ENCODE measurements at regions of chr10 and their contacts with region 1.

Region 1: DNA sequence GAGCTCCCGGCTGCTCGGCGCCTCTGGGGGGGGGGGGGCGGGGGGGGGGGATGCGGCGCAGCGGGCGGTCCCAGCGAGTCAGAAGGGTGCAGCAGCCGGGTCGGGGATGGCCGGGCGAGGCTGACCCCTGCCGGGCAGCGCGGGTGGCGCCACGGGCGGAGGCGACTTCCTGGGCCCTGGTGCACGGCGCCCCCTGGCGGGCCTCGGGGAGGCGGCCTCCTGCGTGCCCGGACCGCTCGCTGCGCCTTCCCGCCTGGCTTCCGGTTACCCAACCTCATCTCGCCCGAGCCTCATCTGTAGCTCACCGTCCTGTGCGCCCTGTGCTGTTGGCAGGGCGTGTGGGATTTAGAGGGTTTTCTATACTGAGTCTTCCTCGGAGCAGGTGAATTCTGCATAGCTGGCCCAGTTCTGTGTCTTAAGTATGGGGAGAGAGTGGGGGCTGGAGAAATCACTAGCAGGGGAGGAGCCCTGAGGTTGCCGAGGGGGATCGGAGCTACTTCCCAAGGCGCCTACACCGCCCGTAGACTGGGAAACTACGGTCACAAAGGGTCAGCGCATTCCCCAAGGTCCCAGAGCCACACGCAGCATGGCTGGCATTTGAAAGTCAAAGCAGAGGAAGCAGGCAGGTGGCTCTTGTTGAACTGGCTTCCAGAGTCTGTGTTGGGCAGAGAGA is 28.3 kb upstream of the WDFY4 start:
- DNase-seq: peak; percentile 51 to 96 (median 81)
- ATAC-seq: peak; percentile 97
- H3K4me3 ChIP-seq: peak overlapping the region; percentile 70
- H3K4me3 Mint-ChIP-seq: peak overlapping the region; percentile 76 to 91 (median 85)
- H3K27ac ChIP-seq: no peak overlapping the region
- H3K27ac Mint-ChIP-seq: peak overlapping the region in 2 of 9 donors; percentile 65 to 73
- H3K4me1 ChIP-seq: peaks cover 4 to 5% of the 10 kb centered on the region in 2 donors
- H3K4me1 Mint-ChIP-seq: peaks cover 5 to 12% (median 7%) of the 10 kb centered on the region in 7 donors
- H3K27me3 ChIP-seq: no peaks in the 10 kb centered on the region
- H3K27me3 Mint-ChIP-seq: peaks cover 16 to 46% (median 25%) of the 10 kb centered on the region in 5 donors

Region 2: DNA sequence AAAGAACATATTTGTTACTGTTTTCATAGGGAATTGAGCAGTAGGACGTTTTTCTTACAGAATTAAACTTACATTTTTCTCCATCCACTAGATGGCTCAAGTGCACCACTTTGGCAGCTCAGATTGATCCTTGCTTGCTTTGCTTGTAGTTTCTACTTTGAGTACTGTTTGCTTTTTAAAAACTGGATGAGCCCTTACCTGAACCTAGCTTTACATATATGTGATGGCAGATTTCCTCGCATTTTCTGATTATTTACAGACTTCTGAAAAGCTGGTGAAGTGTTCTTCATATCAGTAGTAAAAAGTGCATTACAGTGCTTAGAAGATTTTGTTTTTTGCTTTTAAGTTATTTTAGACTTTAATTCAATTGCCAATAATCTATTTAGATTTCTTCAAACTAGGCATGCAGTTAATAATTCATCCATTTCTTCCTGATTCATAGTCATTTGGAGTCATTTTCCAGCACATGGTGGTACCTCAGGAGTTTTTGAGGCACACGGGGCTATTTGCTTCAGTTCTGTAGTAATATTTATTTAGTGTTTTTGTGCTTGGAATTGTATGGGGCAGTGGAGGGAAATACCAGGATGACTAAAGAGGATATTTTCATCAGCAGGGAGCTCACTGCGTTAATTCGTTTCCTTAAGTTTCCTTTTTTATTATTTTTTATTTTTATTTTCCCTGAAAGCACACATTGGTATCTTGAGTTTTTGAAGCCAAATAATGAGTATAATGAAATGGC is 292.6 kb before region 1 on chr10:
- CTCF ChIA-PET with region 1: interaction called, 19 read pairs
- POLR2A ChIA-PET with region 1: no interaction called
- intact Hi-C with region 1: loop called (anchors 1 kb)
- DNase-seq: peak in 6 of 9 donors; percentile 7 to 45 (median 37)
- ATAC-seq: peak; percentile 51
- H3K4me3 ChIP-seq: no peak overlapping the region
- H3K4me3 Mint-ChIP-seq: no peak overlapping the region
- H3K27ac ChIP-seq: no peak overlapping the region
- H3K27ac Mint-ChIP-seq: no peak overlapping the region
- H3K4me1 ChIP-seq: no peaks in the 10 kb centered on the region
- H3K4me1 Mint-ChIP-seq: peaks cover 4 to 59% (median 49%) of the 10 kb centered on the region in 7 donors
- H3K27me3 ChIP-seq: no peaks in the 10 kb centered on the region
- H3K27me3 Mint-ChIP-seq: no peaks in the 10 kb centered on the region

Region 3: DNA sequence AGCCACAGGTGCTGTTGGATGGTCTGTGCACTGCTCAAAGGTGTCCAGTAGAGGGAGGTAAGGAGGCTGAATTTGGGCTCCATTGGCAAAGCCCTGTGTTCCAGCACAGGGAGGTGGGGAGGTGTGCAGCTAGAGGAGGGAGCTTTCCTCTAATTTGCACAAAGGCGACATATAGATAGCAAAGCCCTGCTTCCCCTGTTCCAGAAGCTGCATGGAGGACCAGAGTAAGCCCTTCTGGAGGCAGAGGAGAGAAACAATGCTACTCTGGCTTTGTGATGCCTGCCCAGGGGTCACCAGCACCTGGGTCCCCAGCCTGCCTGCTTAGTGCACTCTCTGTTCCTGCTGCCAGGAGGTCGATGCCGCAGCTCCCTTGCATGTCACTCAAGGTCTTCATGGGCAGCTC is 48.1 kb before region 1 on chr10:
- CTCF ChIA-PET with region 1: no interaction called
- POLR2A ChIA-PET with region 1: no interaction called
- intact Hi-C with region 1: loop called in 1 of 2 experiments (anchors 5 kb)
- DNase-seq: peak in 4 of 9 donors; percentile 2 to 25 (median 12)
- ATAC-seq: peak; percentile 47
- H3K4me3 ChIP-seq: no peak overlapping the region
- H3K4me3 Mint-ChIP-seq: no peak overlapping the region
- H3K27ac ChIP-seq: no peak overlapping the region
- H3K27ac Mint-ChIP-seq: no peak overlapping the region
- H3K4me1 ChIP-seq: no peaks in the 10 kb centered on the region
- H3K4me1 Mint-ChIP-seq: peaks cover 0 to 6% (median 5%) of the 10 kb centered on the region in 7 donors
- H3K27me3 ChIP-seq: no peaks in the 10 kb centered on the region
- H3K27me3 Mint-ChIP-seq: peaks cover 36 to 60% (median 42%) of the 10 kb centered on the region in 5 donors

Region 4: DNA sequence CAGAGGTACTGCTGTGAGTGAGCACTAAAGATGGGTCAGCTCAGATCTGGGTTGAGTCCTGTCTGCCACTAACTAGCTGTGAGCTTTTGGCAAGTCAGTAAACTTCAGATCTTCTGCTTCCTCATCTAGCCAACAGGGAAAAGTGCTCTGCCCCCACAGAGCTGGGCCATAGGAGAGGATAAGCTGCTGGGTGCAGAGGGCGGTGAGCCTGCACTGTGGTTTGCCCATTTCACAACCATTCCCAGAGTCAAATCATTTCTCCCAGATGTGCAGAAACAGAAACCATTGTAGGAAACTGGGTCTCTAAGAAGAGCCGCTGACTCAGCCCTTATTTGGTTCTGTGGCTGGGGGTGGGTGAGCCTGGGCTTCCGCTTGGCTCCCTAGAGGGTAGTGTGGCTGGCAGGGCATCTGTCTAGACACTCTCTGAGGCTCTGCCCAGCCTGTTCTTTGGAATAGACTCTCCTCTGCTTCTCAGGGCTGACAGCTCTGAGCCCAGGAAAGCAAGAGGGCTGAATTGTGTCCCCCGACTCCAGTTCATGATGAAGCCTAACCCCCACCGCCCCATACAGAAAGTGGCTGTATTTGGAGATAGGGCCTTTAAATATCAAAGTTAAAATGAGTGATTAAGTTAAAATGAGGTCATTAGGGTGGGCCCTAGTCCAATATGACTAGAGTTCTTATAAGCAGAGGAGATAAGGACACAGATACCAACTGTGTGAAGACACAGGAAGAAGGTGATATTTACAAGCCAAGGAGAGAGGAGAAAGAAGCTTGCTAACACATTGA is 22.0 kb before region 1 on chr10:
- CTCF ChIA-PET with region 1: no interaction called
- POLR2A ChIA-PET with region 1: no interaction called
- intact Hi-C with region 1: no loop called
- DNase-seq: peak in 1 of 9 donors; percentile 26
- ATAC-seq: peak; percentile 91
- H3K4me3 ChIP-seq: no peak overlapping the region
- H3K4me3 Mint-ChIP-seq: peak overlapping the region in 1 of 10 donors; percentile 19
- H3K27ac ChIP-seq: no peak overlapping the region
- H3K27ac Mint-ChIP-seq: no peak overlapping the region
- H3K4me1 ChIP-seq: no peaks in the 10 kb centered on the region
- H3K4me1 Mint-ChIP-seq: peaks cover 9 to 19% (median 12%) of the 10 kb centered on the region in 7 donors
- H3K27me3 ChIP-seq: no peaks in the 10 kb centered on the region
- H3K27me3 Mint-ChIP-seq: peaks cover 18 to 39% (median 30%) of the 10 kb centered on the region in 5 donors

Region 5: GRCh38 chr10:48691812-48692528 is 35.6 kb after region 1 on chr10:
- CTCF ChIA-PET with region 1: no interaction called
- POLR2A ChIA-PET with region 1: no interaction called
- intact Hi-C with region 1: no loop called
- DNase-seq: no peak
- ATAC-seq: no peak
- H3K4me3 ChIP-seq: no peak overlapping the region
- H3K4me3 Mint-ChIP-seq: no peak overlapping the region
- H3K27ac ChIP-seq: no peak overlapping the region
- H3K27ac Mint-ChIP-seq: no peak overlapping the region
- H3K4me1 ChIP-seq: no peaks in the 10 kb centered on the region
- H3K4me1 Mint-ChIP-seq: no peaks in the 10 kb centered on the region
- H3K27me3 ChIP-seq: no peaks in the 10 kb centered on the region
- H3K27me3 Mint-ChIP-seq: peaks cover 0 to 19% (median 6%) of the 10 kb centered on the region in 5 donors

Region 6: DNA sequence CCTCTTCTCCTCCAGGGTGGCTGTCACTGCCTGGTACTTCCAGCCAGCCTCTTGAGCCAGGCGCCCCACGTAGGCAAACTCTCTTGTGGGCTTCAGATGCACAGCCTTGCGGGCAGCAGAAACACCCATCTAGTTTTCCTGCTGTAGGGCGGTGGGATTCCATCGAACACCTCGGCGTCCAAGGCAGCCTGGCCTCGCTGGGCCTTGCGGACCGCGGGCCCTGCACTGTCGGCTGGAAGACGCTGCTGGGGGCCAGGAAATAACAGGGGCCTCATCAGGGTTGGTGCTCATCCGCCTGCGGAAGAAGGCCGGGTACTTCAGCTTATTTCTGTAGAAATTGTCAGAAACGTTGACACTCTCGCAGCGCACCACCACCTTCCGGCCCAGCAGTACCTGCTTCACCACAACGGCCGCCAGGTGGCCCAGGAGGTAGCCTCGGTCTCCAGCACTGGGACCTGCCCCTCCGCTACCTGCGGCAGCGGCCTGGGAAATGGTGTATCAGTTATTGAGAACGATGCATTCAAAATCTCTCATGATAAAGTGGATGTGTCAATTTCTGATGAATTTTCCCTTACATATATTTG is 89.4 kb after region 1 on chr10:
- CTCF ChIA-PET with region 1: no interaction called
- POLR2A ChIA-PET with region 1: no interaction called
- intact Hi-C with region 1: no loop called
- DNase-seq: no peak
- ATAC-seq: no peak
- H3K4me3 ChIP-seq: no peak overlapping the region
- H3K4me3 Mint-ChIP-seq: no peak overlapping the region
- H3K27ac ChIP-seq: no peak overlapping the region
- H3K27ac Mint-ChIP-seq: no peak overlapping the region
- H3K4me1 ChIP-seq: no peaks in the 10 kb centered on the region
- H3K4me1 Mint-ChIP-seq: no peaks in the 10 kb centered on the region
- H3K27me3 ChIP-seq: no peaks in the 10 kb centered on the region
- H3K27me3 Mint-ChIP-seq: peaks cover 0 to 4% (median 0%) of the 10 kb centered on the region in 5 donors

Region 7: DNA sequence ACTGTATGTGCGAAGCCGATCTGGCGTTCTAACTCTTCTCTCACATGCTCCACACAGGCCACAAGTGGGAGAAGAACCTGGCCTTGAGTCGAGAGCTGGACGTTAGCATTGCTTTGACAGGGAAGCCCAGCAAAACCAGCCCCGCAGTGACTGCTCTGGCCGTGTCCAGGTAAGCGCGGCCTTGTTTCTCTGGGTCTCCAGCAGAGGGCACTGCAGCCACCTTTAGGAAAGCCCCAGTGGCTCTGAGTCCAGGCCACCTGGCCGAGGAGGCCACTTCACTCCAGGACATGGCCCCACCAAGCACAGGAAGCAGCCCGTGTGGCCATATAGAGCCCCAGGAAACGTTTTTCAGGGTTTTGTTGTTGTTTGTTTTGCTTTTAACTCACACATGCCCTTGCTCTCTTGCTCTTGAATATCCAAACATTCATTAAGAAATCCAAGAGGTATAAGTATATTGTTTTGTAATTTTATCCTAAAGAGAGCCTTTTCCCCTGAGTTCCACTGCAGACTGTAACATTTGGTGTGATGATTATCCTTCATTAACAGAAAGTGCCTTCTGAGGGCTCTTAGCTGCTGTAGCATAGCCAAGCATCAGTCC is 325.0 kb after region 1 on chr10:
- CTCF ChIA-PET with region 1: no interaction called
- POLR2A ChIA-PET with region 1: no interaction called
- intact Hi-C with region 1: loop called in 1 of 2 experiments (anchors 2 kb)
- DNase-seq: peak in 2 of 9 donors; percentile 8 to 43
- ATAC-seq: peak; percentile 57
- H3K4me3 ChIP-seq: no peak overlapping the region
- H3K4me3 Mint-ChIP-seq: no peak overlapping the region
- H3K27ac ChIP-seq: no peak overlapping the region
- H3K27ac Mint-ChIP-seq: no peak overlapping the region
- H3K4me1 ChIP-seq: no peaks in the 10 kb centered on the region
- H3K4me1 Mint-ChIP-seq: no peaks in the 10 kb centered on the region
- H3K27me3 ChIP-seq: no peaks in the 10 kb centered on the region
- H3K27me3 Mint-ChIP-seq: no peaks in the 10 kb centered on the region

Region 8: GRCh38 chr10:49398000-49398861 is 741.9 kb after region 1 on chr10:
- CTCF ChIA-PET with region 1: no interaction called
- POLR2A ChIA-PET with region 1: no interaction called
- intact Hi-C with region 1: loop called in 1 of 2 experiments (anchors 10 kb)
- DNase-seq: peak in 7 of 9 donors; percentile 9 to 72 (median 23)
- ATAC-seq: peak; percentile 85
- H3K4me3 ChIP-seq: no peak overlapping the region
- H3K4me3 Mint-ChIP-seq: peak overlapping the region in 8 of 10 donors; percentile 9 to 62 (median 40)
- H3K27ac ChIP-seq: no peak overlapping the region
- H3K27ac Mint-ChIP-seq: no peak overlapping the region
- H3K4me1 ChIP-seq: peaks cover 0 to 5% of the 10 kb centered on the region in 2 donors
- H3K4me1 Mint-ChIP-seq: peaks cover 0 to 16% (median 9%) of the 10 kb centered on the region in 7 donors
- H3K27me3 ChIP-seq: peaks cover 4 to 22% of the 10 kb centered on the region in 2 donors
- H3K27me3 Mint-ChIP-seq: peaks cover 58 to 79% (median 76%) of the 10 kb centered on the region in 5 donors

Region 9: DNA sequence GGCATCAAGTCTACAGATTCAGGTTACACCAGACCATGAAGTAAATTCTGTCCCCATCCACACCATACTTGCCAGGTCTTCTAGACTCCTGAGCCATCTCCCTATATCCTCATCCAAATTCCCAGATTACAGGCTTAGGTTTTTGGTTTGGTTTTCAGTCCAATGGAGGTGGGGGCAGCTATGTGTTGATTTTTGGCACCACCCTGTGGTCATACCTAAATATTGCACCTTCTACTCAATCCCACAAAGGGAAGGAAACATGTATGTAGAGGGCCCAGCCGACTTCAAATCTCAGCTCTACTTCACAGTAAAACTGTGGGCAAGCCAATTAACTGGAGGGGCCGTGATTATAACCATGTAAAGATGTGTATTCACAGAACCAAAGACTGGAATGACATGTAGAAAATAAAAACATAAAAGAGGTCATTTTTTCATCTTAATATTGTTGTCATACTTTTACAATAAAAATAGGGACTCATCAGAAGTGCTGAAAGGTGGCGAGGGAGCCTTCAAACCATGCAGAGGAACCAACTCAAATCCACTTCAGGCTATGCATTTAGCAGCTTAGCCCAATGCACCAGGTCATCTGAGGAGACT is 862.7 kb after region 1 on chr10:
- CTCF ChIA-PET with region 1: interaction called, 3 read pairs
- POLR2A ChIA-PET with region 1: no interaction called
- intact Hi-C with region 1: loop called in 1 of 2 experiments (anchors 1 kb)
- DNase-seq: peak in 5 of 9 donors; percentile 25 to 45 (median 43)
- ATAC-seq: peak; percentile 80
- H3K4me3 ChIP-seq: no peak overlapping the region
- H3K4me3 Mint-ChIP-seq: no peak overlapping the region
- H3K27ac ChIP-seq: no peak overlapping the region
- H3K27ac Mint-ChIP-seq: no peak overlapping the region
- H3K4me1 ChIP-seq: no peaks in the 10 kb centered on the region
- H3K4me1 Mint-ChIP-seq: peaks cover 0 to 22% (median 4%) of the 10 kb centered on the region in 7 donors
- H3K27me3 ChIP-seq: no peaks in the 10 kb centered on the region
- H3K27me3 Mint-ChIP-seq: no peaks in the 10 kb centered on the region

Measured in naive thymus-derived CD4-positive, alpha-beta T cell (primary cell).